Activated CD4-positive, alpha-beta T cell treated with anti-CD3 and anti-CD28 coated beads, Interleukin-2, amount 10 ng/mL, durations not matched to agents 24 days and 14 days (primary cell): ENCODE measurements at regions of chr7 and their contacts with region 1.

Region 1: GRCh38 chr7:73522105-73522872 is at the start of gene BAZ1B:
- DNase-seq: peak; percentile 99
- H3K4me3 Mint-ChIP-seq: peak within 1 kb of the TSS; percentile 94
- H3K27ac Mint-ChIP-seq: peak within 1 kb of the TSS; percentile 94
- H3K4me1 Mint-ChIP-seq: peaks cover 50% of the 10 kb centered on the region
- H3K27me3 Mint-ChIP-seq: no peaks in the 10 kb centered on the region
- total RNA-seq, gene BAZ1B: 110 and 112 TPM in 2 replicates

Region 2: DNA sequence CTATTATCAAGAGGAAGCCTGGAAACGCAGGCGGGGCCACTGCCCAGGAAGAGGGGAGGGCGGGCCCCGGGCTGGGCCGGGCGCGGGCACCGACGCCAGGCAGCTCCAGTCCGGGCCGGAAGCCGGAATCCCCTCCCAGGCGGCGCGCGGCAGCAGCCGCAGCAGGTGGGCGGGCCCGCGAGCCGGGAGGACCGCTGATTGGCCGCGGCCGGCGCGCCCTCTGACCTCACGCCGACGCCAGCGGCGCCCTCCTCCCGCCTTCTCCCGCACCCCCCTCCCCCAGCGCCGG is 34.8 kb after region 1 on chr7:
- intact Hi-C with region 1: loop called (anchors 1 kb)
- DNase-seq: peak; percentile 98
- H3K4me3 Mint-ChIP-seq: peak overlapping the region; percentile 89
- H3K27ac Mint-ChIP-seq: peak overlapping the region; percentile 95
- H3K4me1 Mint-ChIP-seq: peaks cover 32% of the 10 kb centered on the region
- H3K27me3 Mint-ChIP-seq: no peaks in the 10 kb centered on the region

Region 3: DNA sequence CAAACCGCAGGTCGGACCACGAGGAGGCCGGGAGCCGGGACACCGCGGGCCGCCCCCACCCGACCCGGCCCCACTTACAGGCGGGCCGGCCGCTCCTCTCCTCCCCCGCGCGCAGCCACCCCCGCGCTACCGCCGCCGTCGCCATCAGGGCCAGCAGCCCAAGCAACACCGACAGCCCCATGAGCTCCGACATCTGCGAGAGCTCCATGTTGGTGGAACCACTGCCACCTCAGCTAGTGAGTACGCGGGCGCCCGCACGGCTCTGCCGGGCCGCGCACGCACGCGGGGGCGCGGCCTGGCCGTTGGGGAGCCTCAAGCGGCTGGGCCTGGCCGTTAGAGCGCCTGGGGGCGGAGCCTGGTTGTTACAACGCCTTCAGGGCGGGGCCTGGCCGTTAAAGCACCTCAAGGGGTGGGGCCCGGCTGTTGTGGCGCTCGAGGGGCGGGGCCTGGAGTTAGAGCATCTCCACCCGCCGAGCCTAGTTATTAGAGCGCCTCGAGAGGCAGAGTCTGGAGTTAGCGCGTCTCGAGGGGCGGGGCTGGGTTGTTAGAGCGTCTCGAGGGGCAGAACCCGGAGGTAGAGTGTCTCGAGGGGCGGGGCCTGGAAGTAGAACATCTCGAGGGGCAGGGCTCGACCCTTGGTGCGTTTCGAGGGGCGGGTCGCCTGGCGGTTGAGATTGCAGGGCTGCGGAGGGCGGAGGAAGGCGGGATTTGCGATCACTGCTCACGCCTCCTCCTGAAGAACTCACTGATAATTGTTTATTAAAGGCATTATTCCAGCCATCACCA is 56.2 kb after region 1 on chr7 and contains the start of gene TBL2:
- intact Hi-C with region 1: loop called (anchors 1 kb)
- DNase-seq: peak; percentile 100
- H3K4me3 Mint-ChIP-seq: peak within 1 kb of the TSS; percentile 99
- H3K27ac Mint-ChIP-seq: peak within 1 kb of the TSS; percentile 97
- H3K4me1 Mint-ChIP-seq: peaks cover 28% of the 10 kb centered on the region
- H3K27me3 Mint-ChIP-seq: no peaks in the 10 kb centered on the region
- total RNA-seq, gene TBL2: 41.4 and 49.1 TPM in 2 replicates

Region 4: DNA sequence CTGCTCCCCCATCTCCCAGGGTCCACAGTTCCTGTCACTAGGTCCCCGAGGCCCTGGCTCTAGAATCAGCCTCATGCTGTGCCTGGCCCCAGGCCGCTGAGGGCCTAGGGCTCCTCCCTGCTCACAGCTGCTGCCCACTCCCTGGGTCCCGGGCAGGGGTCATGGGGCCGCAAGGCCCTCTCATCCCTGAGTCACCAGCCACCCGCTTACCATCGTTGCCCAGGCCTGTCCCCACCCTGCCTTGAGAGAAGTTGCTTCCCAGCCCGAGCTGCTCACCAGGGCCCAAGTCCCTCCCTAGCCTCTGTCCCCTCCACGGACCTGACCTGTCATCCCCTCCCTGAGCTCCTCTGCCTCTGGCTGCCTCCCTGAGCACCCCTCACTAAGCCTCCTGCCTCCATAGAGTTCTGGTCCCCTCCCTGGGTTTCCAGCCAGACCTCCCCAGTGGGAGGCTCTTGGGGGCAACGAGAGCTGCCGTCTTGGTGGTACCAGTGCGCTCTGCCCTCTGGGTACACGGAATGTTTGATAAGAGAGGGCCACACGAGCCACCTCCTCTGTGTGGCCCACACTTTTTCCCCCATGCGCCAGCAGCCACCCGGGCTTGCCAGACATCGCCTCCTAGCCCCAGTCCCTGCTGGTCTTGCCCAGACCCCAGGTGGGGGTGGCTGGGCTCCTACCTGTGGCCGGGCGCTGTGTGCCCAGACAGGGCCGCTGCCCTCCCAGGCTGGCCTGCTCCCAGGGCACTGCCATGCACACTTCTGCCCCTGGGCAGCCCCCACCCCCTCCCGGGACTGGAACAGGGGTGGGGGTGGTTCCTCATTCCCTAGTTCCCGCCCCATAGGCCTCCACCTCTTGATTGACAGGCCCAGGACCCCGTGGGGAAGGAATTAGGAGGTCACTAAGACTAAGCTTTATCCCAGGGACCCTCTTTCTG is 80.7 kb after region 1 on chr7:
- intact Hi-C with region 1: no loop called
- DNase-seq: no peak
- H3K4me3 Mint-ChIP-seq: no peak overlapping the region
- H3K27ac Mint-ChIP-seq: no peak overlapping the region
- H3K4me1 Mint-ChIP-seq: no peaks in the 10 kb centered on the region
- H3K27me3 Mint-ChIP-seq: peaks cover 11% of the 10 kb centered on the region

Region 5: GRCh38 chr7:73667344-73668102 is 145.2 kb after region 1 on chr7 and contains the start of gene VPS37D:
- intact Hi-C with region 1: loop called (anchors 5 kb)
- DNase-seq: peak; percentile 98
- H3K4me3 Mint-ChIP-seq: peak within 1 kb of the TSS; percentile 81
- H3K27ac Mint-ChIP-seq: no peak within 1 kb of the TSS
- H3K4me1 Mint-ChIP-seq: peaks cover 13% of the 10 kb centered on the region
- H3K27me3 Mint-ChIP-seq: peaks cover 46% of the 10 kb centered on the region
- total RNA-seq, gene VPS37D: 0.40 and 0.47 TPM in 2 replicates

Region 6: DNA sequence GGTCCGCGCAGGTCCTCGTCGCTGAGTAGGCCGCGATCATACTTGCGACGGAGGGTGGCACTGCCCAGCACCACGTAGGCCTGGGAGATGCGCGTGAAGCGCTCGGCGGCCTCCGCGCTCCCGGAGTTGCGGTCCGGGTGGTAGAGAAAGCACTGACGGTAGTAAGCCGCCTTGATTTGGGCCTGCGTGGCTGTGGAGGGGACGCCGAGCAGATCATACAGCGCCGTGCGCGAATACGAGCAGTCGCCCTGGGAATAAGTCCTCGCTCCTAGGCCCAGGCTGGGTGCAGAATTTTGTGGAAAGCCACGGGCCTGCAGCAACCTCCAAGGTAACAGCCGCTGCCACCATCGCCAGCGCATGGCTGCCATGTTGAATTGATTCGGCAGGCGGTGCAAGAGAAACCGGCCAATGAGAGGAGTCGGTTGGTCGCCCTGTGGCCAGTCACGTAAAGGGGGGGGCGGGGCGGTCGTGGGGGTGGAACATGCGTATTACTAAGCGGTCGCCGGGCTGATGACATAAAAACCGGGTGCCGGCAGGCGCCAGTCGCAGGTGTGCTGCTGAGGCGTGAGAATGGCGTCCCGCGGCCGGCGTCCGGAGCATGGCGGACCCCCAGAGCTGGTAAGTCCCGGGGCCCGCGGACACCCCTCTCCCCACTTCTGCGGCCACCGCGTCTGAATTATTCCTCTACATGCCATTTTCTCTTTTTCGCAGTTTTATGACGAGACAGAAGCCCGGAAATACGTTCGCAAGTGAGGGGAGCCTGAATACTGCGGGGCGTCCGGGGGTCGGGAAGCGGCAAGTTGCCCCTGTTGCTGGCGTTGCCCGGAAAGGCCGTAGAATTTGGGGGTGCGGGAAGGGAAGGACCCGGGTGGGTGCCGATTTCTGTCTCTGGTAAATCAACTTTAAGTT is 161.0 kb after region 1 on chr7 and contains the starts of genes BUD23 and DNAJC30:
- intact Hi-C with region 1: loop called (anchors 1 kb)
- DNase-seq: peak; percentile 97
- H3K4me3 Mint-ChIP-seq: peak within 1 kb of the TSS; percentile 96
- H3K27ac Mint-ChIP-seq: peak within 1 kb of the TSS; percentile 98
- H3K4me1 Mint-ChIP-seq: peaks cover 23% of the 10 kb centered on the region
- H3K27me3 Mint-ChIP-seq: no peaks in the 10 kb centered on the region
- total RNA-seq, gene BUD23: 133 TPM in 2 replicates
- total RNA-seq, gene DNAJC30: 9.4 and 10.9 TPM in 2 replicates

Region 7: GRCh38 chr7:73718905-73719805 is 196.9 kb after region 1 on chr7 and contains the start of gene STX1A:
- intact Hi-C with region 1: loop called (anchors 5 kb)
- DNase-seq: peak; percentile 93
- H3K4me3 Mint-ChIP-seq: peak within 1 kb of the TSS; percentile 92
- H3K27ac Mint-ChIP-seq: peak within 1 kb of the TSS; percentile 91
- H3K4me1 Mint-ChIP-seq: peaks cover 33% of the 10 kb centered on the region
- H3K27me3 Mint-ChIP-seq: peaks cover 19% of the 10 kb centered on the region
- total RNA-seq, gene STX1A: 19.0 and 19.4 TPM in 2 replicates

Region 8: DNA sequence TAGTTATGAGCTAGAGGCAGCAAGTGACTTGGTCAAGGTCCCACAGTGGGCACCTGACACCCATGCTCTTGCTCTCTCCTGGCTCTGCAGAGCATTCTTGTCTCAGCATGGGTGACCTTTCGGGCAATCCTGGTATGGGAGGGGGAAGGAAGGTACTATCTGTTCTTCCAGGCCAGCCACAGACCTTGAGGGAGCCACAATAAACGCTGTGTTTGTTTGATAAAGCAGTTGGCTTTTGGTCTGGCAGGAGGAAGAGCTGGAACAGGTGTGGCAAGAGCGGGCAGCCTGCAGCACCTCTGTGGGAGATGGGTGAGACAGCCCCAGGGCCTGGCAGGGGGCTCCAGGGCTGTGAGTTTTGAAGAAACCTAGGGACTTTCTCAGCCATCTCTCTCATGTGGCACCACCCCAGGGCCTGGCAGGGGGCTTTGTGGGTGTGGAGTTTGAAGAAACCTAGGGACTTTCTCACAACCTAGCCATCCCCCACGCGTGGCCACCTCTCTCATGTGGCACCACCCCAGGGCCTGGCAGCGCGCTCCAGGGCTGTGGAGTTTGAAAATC is 236.4 kb after region 1 on chr7:
- intact Hi-C with region 1: no loop called
- DNase-seq: no peak
- H3K4me3 Mint-ChIP-seq: no peak overlapping the region
- H3K27ac Mint-ChIP-seq: no peak overlapping the region
- H3K4me1 Mint-ChIP-seq: no peaks in the 10 kb centered on the region
- H3K27me3 Mint-ChIP-seq: no peaks in the 10 kb centered on the region